ENCODE measurements at regions of chr11 and their contacts with region 1.

Region 1: DNA sequence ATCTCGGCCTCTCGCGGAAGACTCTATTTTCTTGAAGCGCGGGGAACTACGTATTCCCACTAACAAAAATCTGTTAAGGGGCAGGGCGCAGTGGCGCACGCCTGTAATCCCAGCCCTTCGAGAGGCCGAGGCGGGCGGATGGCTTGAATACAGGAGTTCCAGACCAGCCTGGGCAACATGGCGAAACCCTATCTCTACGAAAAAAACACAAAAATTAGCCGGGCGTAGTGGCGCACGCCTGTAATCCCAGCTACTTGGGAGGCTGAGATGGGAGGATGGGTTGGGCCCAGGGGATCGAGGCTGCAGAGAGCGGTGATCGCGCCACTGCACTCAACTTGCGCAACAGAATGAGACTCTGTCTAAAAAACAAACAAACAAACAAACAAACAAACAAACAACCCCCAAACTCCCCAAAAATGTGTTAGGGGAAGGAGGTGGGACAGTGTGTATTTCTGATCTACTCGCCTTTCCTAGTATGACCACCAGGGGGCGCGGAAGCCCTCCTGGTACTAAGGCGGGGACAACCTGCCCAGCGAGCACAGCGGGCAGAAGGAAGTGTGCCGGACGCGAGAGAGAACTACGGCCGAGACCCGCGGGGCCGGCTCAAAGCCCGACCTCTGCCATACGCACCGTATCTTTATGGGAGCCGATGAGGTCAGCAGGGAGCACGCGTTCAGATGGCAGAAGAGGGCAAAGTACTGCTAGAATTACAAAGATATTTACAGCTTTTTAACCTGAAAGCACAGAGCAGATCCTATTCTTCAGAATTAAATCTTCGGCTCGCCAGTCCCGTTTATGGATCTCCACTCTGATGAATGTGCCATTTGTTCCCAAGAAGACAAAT is 1.3 kb upstream of the STX3 start:
- DNase-seq: peak; percentile 96
- H3K4me3 Mint-ChIP-seq: peak overlapping the region; percentile 96
- H3K27ac Mint-ChIP-seq: peak overlapping the region; percentile 90
- H3K4me1 Mint-ChIP-seq: peaks cover 37% of the 10 kb centered on the region
- H3K27me3 Mint-ChIP-seq: peaks cover 4% of the 10 kb centered on the region

Region 2: GRCh38 chr11:59560702-59561469 is 193.0 kb before region 1 on chr11:
- intact Hi-C with region 1: loop called (anchors 5 kb)
- DNase-seq: peak; percentile 90
- H3K4me3 Mint-ChIP-seq: peak overlapping the region; percentile 89
- H3K27ac Mint-ChIP-seq: peak overlapping the region; percentile 96
- H3K4me1 Mint-ChIP-seq: peaks cover 46% of the 10 kb centered on the region
- H3K27me3 Mint-ChIP-seq: peaks cover 6% of the 10 kb centered on the region

Region 3: DNA sequence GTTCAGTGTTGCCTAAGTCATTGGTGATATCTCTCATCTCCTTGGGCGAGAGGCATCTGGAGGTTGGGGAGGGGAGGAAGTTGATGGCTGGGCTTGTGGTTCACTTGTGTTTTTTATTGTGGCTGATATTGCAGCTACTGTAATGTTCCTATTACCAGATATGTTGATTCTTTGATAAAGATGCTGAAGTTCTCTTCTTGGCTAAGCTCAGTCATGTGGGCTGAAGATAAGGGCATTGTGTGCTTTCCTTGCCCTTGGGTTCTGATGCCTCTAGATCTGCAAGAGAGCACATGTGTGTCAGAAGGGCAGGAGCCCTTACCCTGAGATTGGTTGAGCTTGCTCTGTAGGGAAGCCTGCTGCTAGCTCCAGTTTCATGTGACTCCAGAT is 13.3 kb after region 1 on chr11:
- intact Hi-C with region 1: loop called (anchors 1 kb)
- DNase-seq: peak; percentile 78
- H3K4me3 Mint-ChIP-seq: no peak overlapping the region
- H3K27ac Mint-ChIP-seq: peak overlapping the region; percentile 27
- H3K4me1 Mint-ChIP-seq: peaks cover 28% of the 10 kb centered on the region
- H3K27me3 Mint-ChIP-seq: no peaks in the 10 kb centered on the region

Region 4: GRCh38 chr11:59802639-59803176 is 48.8 kb after region 1 on chr11:
- intact Hi-C with region 1: loop called (anchors 1 kb)
- DNase-seq: peak; percentile 89
- H3K4me3 Mint-ChIP-seq: no peak overlapping the region
- H3K27ac Mint-ChIP-seq: no peak overlapping the region
- H3K4me1 Mint-ChIP-seq: peaks cover 13% of the 10 kb centered on the region
- H3K27me3 Mint-ChIP-seq: no peaks in the 10 kb centered on the region

Region 5: GRCh38 chr11:59918987-59919589 is 165.2 kb after region 1 on chr11:
- intact Hi-C with region 1: loop called (anchors 1 kb)
- DNase-seq: peak; percentile 77
- H3K4me3 Mint-ChIP-seq: no peak overlapping the region
- H3K27ac Mint-ChIP-seq: no peak overlapping the region
- H3K4me1 Mint-ChIP-seq: no peaks in the 10 kb centered on the region
- H3K27me3 Mint-ChIP-seq: no peaks in the 10 kb centered on the region

Region 6: GRCh38 chr11:60378354-60378753 is 624.5 kb after region 1 on chr11 and contains the start of gene MS4A7:
- intact Hi-C with region 1: no loop called
- DNase-seq: no peak
- H3K4me3 Mint-ChIP-seq: no peak within 1 kb of the TSS
- H3K27ac Mint-ChIP-seq: no peak within 1 kb of the TSS
- H3K4me1 Mint-ChIP-seq: peaks cover 7% of the 10 kb centered on the region
- H3K27me3 Mint-ChIP-seq: peaks cover 12% of the 10 kb centered on the region
- total RNA-seq, gene MS4A7: not detected in 2 replicates

Measured in activated CD4-positive, alpha-beta T cell treated with anti-CD3 and anti-CD28 coated beads, Interleukin-2, amount 10 ng/mL, durations not matched to agents 24 days and 14 days (primary cell).